ENCODE measurements at regions of chr11 and their contacts with region 1.

Region 1: GRCh38 chr11:93784152-93784934 is at the start of gene MED17:
- DNase-seq: peak; percentile 93 to 95
- H3K4me3 ChIP-seq: peak within 1 kb of the TSS; percentile 91 to 92
- H3K27ac ChIP-seq: peak within 1 kb of the TSS; percentile 89 to 95
- H3K4me1 ChIP-seq: peaks cover 0 to 37% (median 25%) of the 10 kb centered on the region in 4 donors
- H3K27me3 ChIP-seq: no peaks in the 10 kb centered on the region
- CTCF ChIP-seq: peak; percentile 41 to 44

Region 2: DNA sequence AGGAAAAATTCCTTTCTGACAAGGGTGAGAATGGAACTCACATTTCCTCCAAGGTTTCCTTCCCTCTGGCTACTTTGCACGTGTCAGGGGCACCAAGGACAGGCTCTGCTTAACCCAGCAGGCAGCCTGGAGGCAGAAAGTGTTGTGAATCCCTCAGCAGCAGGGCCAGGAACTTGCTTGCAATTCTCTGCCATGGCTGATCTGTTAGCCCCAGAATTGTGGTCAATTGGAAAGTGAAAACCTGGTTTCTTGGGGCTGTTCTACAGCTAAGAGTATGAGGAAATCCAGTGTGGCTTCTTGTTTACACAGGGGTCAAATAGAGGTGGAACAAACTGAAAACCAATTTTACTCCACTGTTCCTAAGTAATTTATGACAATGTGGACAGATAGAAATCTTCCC is 161.2 kb before region 1 on chr11:
- intact Hi-C with region 1: no loop called
- DNase-seq: no peak
- H3K4me3 ChIP-seq: no peak overlapping the region
- H3K27ac ChIP-seq: no peak overlapping the region
- H3K4me1 ChIP-seq: no peaks in the 10 kb centered on the region
- H3K27me3 ChIP-seq: no peaks in the 10 kb centered on the region
- CTCF ChIP-seq: no peak

Region 3: GRCh38 chr11:93727985-93728791 is 56.2 kb before region 1 on chr11:
- intact Hi-C with region 1: no loop called
- DNase-seq: no peak
- H3K4me3 ChIP-seq: no peak overlapping the region
- H3K27ac ChIP-seq: no peak overlapping the region
- H3K4me1 ChIP-seq: no peaks in the 10 kb centered on the region
- H3K27me3 ChIP-seq: no peaks in the 10 kb centered on the region
- CTCF ChIP-seq: no peak

Region 4: DNA sequence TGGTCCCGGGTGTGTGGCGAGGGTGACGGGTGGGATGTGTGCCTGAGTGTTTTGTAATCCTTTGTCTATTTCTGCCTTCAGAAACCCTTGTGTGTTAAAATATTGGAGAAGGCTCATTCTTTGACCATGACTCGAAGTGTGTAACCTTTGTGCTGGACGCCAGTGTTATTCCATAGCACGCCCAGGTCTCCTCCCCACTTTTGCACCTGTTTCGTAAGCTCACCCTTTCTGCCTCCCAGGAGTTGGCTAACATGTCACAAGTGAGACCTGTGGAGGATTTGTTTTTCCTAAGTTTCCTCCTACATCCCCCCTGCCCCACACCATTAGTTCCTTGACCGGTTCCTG is 42.5 kb before region 1 on chr11:
- intact Hi-C with region 1: loop called (anchors 2 kb)
- DNase-seq: no peak
- H3K4me3 ChIP-seq: peak overlapping the region; percentile 74 to 89
- H3K27ac ChIP-seq: peak overlapping the region; percentile 91 to 93
- H3K4me1 ChIP-seq: peaks cover 0 to 63% (median 42%) of the 10 kb centered on the region in 4 donors
- H3K27me3 ChIP-seq: no peaks in the 10 kb centered on the region
- CTCF ChIP-seq: peak in 1 of 2 experiments; percentile 3

Region 5: DNA sequence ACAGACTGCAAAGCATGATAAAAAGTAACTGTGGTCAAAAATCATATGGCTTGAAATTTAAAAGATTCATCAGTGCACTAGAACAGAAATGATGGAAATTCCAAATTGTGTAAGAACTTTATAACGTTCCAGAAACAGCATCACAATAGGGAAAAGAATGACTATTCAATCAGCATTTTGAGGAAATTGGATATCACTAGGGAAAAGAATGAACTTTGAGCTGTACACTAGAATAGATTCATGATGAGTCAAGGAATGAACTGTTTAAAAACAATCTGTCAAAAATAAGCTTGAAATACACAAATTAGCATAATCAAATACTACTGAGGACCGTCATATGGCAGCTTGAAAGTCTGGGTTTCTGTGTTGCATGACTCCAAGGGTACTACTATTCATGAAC is 216.3 kb after region 1 on chr11:
- intact Hi-C with region 1: no loop called
- DNase-seq: no peak
- H3K4me3 ChIP-seq: no peak overlapping the region
- H3K27ac ChIP-seq: no peak overlapping the region
- H3K4me1 ChIP-seq: no peaks in the 10 kb centered on the region
- H3K27me3 ChIP-seq: no peaks in the 10 kb centered on the region
- CTCF ChIP-seq: no peak

Measured in tibial artery (tissue), 4 donors.